Posterior vena cava (tissue), 2 donors: ENCODE measurements at regions of chr12 and their contacts with region 1.

Region 1: DNA sequence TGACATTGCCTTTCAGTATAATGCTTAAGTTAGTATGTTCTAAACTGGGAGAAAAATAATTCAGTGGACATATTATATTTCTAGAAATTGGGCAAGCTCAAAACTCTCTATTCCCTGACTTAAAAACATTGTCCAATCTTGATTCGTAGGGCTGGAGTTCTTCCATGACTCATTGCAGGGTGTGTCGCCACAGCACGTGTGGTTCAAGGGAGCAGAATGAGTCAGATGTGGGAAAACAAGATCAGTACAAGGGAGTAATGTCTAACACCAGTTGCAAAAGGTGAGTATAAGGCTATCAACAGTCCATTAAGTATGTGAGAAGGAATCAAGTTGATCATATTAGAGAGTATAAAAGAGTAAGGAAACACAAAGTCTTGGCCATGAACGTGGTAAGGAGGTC is 887.0 kb downstream of the TMTC2 start:
- DNase-seq: peak; percentile 76

Region 2: DNA sequence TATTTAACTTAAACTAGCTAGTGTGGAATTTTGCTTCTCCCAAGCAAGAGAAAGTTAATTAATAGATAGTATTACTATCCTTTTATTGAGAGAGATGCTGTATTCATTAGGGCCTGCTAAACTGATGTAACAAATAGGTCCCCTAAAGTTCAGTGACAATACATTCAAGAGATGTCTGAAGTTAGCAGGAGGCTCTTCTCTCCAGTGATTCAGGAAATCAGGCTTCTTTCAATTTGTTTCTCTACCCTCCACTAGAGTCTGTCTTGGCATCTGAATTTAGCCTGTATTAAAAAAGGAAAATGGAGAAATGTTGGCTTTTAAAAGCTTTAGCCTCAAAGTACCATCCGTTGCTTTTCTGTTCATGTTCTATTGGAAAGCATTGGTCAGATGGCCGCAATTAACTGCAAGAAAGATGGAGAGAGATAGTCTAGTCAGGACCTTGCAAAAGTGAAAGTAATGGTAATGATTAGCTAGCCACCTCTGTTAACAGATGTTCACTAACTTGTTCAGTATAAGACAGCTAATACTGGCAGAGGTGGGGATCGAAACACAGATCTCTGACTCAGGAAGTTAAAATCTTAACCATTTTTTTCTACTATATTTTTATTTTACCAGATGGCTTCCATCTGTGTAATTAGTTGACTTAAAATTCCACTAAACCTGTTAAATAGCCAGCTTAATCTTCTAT is 100.1 kb before region 1 on chr12:
- intact Hi-C with region 1: no loop called
- DNase-seq: no peak

Region 3: DNA sequence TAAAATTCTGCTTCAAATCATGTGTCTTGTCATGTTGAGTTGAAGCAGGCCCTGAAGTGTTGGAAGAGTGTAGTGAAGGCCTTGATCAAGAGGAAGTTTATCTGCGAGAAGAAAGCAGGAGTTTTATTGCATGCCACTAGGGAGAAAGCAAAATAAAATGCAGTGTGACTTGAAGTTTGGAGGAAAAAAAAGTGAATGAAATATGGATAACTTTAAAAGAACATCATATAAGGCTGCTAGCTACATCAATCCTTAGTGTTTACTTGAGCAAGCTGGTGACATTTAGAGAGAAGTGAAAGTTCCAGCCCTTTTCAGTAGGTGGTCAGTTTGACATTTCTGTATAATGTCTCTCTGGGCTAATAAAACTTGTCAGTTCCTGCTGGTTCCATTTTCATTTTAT is 45.9 kb before region 1 on chr12:
- intact Hi-C with region 1: no loop called
- DNase-seq: no peak

Region 4: GRCh38 chr12:83559650-83560049 is 14.0 kb before region 1 on chr12:
- intact Hi-C with region 1: loop called in 1 of 2 experiments (anchors 2 kb)
- DNase-seq: no peak